AG04449 (cell line): ENCODE measurements at regions of chr19 and their contacts with region 1.

Region 1: GRCh38 chr19:37906869-37907734 is at the start of gene SIPA1L3:
- DNase-seq: peak; percentile 54
- H3K4me3 ChIP-seq: peak within 1 kb of the TSS; percentile 95
- CTCF ChIP-seq: no peak

Region 2: GRCh38 chr19:37803250-37803854 is 103.8 kb before region 1 on chr19:
- CTCF ChIA-PET with region 1: no interaction called
- POLR2A ChIA-PET with region 1: no interaction called
- DNase-seq: no peak
- H3K4me3 ChIP-seq: no peak overlapping the region
- CTCF ChIP-seq: no peak

Region 3: DNA sequence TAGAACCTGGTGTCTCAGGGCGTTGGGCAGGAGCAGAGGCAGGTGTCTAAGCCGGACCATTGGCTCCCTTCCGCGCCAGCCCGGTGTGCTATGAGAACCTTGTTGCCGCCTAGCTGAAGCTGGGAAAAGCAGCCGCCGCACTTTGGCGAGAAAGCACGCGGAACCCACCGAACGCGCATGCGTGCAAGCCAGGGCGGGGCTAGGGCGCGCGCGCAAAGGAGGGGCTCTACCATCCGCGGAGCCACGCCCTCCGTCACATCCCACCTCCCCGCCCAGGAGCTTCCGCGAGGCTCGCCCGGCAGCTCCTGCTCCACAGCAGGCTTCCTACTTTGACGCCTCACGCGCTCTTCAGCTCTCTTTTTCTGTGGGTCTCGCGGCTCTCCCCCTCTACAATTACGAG is 52.0 kb before region 1 on chr19:
- CTCF ChIA-PET with region 1: no interaction called
- POLR2A ChIA-PET with region 1: no interaction called
- DNase-seq: no peak
- H3K4me3 ChIP-seq: peak overlapping the region; percentile 25
- CTCF ChIP-seq: no peak

Region 4: GRCh38 chr19:37874784-37875183 is 32.3 kb before region 1 on chr19:
- CTCF ChIA-PET with region 1: no interaction called
- POLR2A ChIA-PET with region 1: no interaction called
- DNase-seq: no peak
- H3K4me3 ChIP-seq: no peak overlapping the region
- CTCF ChIP-seq: no peak

Region 5: GRCh38 chr19:38004521-38005223 is 97.6 kb after region 1 on chr19:
- CTCF ChIA-PET with region 1: interaction called, 27 read pairs
- POLR2A ChIA-PET with region 1: interaction called, 21 read pairs
- DNase-seq: peak; percentile 94
- H3K4me3 ChIP-seq: peak overlapping the region; percentile 57
- CTCF ChIP-seq: no peak

Region 6: GRCh38 chr19:38055655-38056521 is 148.8 kb after region 1 on chr19:
- CTCF ChIA-PET with region 1: interaction called, 213 read pairs
- POLR2A ChIA-PET with region 1: no interaction called
- DNase-seq: no peak
- H3K4me3 ChIP-seq: no peak overlapping the region
- CTCF ChIP-seq: peak; percentile 11

Region 7: DNA sequence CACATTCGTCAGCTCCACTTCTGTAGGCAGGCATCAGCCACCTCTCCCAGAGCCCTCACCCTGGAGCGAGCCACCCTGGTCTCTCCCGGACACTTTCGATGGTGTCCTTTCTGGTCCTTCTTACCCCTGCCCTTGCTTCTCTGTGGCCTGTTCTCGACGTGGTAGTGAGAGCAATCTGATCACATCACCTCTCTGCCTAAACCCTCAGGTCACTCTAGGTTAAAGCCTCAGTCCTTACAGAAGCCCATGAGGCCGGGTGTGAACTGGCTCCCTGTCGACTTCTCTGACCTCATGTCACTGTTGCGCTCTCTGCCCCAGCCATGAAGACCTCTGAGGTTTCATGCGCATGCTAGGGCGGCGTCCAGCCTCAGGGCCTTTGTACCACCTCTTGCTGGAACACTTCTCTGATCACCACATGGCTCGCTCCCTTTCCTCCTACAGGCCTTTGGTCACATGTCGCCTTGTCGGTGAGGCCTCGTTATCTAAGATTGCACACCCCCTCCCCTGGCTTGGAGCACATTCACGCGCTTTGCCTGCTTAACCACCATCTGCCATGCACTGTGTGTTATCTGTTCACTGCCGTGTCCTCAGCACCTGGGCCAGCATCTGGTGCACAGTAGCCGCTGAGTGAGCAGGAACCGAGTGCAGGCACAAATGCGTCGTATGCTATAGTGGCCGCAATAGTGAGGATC is 215.4 kb after region 1 on chr19:
- CTCF ChIA-PET with region 1: interaction called, 13 read pairs
- POLR2A ChIA-PET with region 1: no interaction called
- DNase-seq: no peak
- H3K4me3 ChIP-seq: no peak overlapping the region
- CTCF ChIP-seq: no peak

Region 8: DNA sequence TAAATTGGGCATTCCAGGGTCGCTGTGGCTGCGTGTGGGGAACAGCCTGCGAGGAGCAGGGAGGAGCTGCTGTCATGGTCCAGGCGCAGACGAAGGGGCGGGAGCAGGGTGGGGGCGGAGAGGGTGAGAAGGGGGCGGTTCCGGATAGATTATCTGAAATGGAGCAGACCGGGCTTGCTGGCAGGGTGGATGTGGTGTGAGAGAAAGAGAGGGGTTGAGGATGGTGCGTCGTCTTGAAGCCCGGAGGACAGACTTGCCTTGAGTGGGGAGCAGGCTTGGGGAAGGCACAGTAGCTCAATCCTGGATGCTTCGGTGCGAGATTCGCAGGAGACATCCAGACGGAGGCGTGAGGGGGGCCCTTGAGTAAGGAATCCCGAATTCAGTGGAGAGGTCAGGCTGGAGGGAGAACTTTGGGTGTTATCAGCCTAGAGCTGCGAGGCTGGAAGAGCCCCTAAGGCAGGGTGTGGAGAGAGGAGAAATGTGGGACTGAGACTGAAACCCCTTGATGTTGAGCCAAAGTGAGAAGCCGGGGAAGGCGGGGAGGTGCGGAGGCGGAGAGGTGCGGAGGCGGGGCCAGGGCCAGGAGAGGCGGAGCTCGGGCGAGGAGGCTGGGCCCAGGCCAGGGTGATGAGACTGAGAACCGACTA is 276.3 kb after region 1 on chr19:
- CTCF ChIA-PET with region 1: interaction called, 10 read pairs
- POLR2A ChIA-PET with region 1: no interaction called
- DNase-seq: no peak
- H3K4me3 ChIP-seq: peak overlapping the region; percentile 34; the same call in 1 of the 2 replicates
- CTCF ChIP-seq: no peak

Region 9: GRCh38 chr19:38335949-38336637 is 429.0 kb after region 1 on chr19:
- CTCF ChIA-PET with region 1: interaction called, 17 read pairs
- POLR2A ChIA-PET with region 1: no interaction called
- DNase-seq: peak; percentile 44
- H3K4me3 ChIP-seq: peak overlapping the region; percentile 89
- CTCF ChIP-seq: no peak